ENCODE measurements at regions of chr7 and their contacts with region 1.

Region 1: DNA sequence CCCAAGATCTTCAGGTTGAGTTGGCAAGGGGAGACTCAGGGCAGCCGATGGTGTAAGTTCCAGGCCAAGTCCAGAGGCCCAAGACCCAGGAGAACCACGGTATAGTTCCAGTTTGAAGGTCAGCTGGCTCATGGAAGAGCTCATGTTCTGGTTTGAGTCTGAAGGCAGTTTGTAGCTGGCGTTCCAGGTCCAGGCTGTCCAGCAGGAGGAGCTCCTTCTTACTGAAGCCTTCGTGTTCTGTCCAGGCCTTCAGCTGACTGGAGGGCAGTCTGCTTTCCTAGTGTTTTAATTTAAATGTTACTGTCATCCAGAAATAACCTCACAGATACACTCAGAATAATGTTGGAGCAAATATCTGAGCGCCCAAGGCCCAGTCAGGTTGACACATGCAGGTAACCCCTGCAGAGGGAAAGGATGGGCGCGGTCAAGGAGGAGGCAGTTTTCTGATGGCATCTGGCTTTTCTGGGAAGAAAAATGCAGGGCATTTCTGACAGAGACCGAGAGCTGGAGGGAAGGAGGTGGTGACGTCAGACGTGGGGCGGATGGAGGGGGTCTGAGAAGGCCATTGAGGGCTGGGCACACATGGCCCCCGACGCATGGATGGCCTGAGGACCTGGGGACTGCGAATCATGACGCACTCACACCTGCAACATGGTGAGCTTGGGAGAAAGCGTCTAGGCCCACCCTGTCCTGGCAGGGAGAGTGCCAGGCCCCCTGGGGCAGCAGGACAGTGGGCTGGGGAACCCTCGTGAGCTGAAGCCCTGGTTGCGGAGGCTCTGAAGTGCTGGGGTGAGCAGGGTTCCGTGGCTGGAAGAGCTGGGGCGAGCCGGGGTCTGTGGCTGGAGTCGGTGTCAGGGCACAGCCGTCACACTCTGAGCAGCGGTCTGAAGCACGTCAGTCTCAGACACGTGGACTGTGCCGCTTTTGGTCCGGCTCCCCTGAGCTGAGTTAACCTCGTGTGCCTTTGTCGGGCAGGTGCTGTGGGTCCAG is 4.4 kb downstream of the SUN1 start:
- DNase-seq: peak; percentile 65
- H3K4me3 ChIP-seq: no peak overlapping the region
- H3K27ac ChIP-seq: no peak overlapping the region; a peak in 1 of 4 replicates
- H3K4me1 ChIP-seq: peaks cover 10 to 15% of the 10 kb centered on the region in 2 experiments; a peak in 3 of 4 replicates
- H3K27me3 ChIP-seq: no peaks in the 10 kb centered on the region
- CTCF ChIP-seq: peak; percentile 63
- EP300 ChIP-seq: no peak
- RAD21 ChIP-seq: peak; percentile 63

Region 2: DNA sequence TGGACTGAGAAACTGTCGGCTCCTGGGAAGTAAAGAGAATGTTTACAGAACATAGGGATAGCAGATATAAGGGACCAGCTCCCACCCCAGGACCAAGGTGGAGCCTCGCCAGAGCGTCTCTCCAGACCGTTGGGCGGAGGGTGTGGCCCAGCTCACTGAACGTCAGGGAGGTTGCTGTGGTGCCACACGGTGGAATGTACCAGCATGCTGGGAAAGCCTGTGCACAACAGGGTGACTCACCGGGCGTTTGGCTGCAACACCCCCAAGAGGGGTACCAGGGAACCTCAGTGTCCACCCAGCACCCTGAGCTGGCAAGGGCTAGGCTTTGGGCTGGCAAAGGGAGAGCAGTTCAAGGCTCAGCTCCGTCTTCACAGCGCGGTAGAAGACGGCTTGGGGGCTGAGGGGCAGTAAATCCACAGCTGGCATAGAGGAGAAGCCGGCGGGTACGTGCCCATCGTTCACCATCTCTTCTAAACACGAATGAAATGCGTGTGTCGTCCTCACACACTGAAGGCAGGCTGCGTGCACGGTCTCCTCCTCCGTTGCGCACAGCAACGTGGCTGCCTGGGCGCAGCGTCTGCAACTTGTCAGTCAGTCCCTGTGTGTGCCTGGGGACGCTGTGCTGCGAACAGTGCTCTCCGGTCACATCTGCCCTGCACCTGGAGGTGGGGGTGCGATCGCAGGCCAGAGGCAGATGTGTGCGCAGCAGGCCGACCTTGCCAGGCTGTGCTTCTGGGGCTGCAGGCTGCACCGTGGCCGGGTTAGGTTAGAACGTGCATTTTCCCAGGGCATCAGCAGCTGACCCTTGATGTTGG is 31.2 kb after region 1 on chr7:
- CTCF ChIA-PET with region 1: interaction called, 112 read pairs
- POLR2A ChIA-PET with region 1: no interaction called
- DNase-seq: peak; percentile 84
- H3K4me3 ChIP-seq: no peak overlapping the region
- H3K27ac ChIP-seq: peak overlapping the region; percentile 28 to 48; a peak in 3 of 4 replicates
- H3K4me1 ChIP-seq: peaks cover 0 to 16% of the 10 kb centered on the region in 2 experiments; a peak in 1 of 4 replicates
- H3K27me3 ChIP-seq: no peaks in the 10 kb centered on the region
- CTCF ChIP-seq: no peak
- EP300 ChIP-seq: no peak
- RAD21 ChIP-seq: no peak

Region 3: DNA sequence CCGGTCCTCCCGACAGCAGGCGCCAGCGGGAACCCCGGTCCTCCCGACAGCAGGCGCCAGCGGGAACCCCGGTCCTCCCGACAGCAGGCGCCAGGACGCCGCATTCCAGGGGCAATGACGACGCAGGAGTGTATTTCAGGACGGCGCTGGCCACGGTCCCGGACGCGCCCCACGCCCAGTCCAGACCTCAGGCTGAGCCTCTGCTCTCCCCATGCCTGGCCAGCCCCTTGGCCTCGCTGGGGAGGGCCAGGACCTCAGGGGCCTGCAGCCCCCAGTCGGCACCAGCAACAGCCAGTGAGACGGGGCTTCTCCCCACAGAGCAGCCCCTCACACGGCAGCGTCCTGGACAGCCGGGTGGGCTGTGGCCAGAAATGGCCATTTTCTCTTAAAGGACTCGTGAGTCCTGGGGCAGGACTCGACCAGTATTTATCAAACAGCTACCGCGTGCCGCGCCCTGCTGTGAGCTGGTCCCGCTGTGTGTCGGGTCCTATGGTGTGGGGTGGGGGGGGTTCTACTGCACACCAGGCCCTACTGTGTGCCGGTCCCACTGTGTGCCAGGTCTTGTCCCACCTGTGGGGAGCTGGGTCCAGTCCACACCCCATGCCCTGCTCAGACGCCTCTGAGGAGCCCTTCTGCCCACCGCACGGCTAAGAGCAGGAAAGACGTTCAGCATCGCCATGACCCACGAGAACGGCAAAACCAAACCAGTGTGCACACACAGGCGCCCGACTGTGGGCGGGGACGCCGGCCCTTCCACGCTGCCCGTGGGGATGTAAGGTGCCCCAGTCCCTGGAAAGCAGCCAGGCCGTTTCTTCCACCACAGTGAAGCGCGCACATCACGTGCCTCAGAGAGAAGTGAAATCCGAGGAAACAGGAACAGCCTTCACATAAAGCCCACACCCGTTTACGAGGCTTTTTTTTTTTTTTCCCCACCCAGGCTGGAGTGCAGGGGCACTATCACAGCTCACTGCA is 72.9 kb after region 1 on chr7:
- CTCF ChIA-PET with region 1: no interaction called
- POLR2A ChIA-PET with region 1: no interaction called
- DNase-seq: peak; percentile 82
- H3K4me3 ChIP-seq: peak overlapping the region in 1 of 2 experiments; percentile 37; a peak in 2 of 4 replicates
- H3K27ac ChIP-seq: no peak overlapping the region
- H3K4me1 ChIP-seq: peaks cover 4% of the 10 kb centered on the region in 2 experiments; a peak in 3 of 4 replicates
- H3K27me3 ChIP-seq: no peaks in the 10 kb centered on the region
- CTCF ChIP-seq: no peak
- EP300 ChIP-seq: no peak
- RAD21 ChIP-seq: no peak